Naive thymus-derived CD4-positive, alpha-beta T cell (primary cell): ENCODE measurements at regions of chr9 and their contacts with region 1.

Region 1: GRCh38 chr9:127586537-127586936 is 25.5 kb upstream of the STXBP1 start:
- DNase-seq: peak; percentile 24 to 60 (median 53)
- ATAC-seq: peak; percentile 79
- H3K4me3 ChIP-seq: no peak overlapping the region
- H3K4me3 Mint-ChIP-seq: no peak overlapping the region
- H3K27ac ChIP-seq: no peak overlapping the region
- H3K27ac Mint-ChIP-seq: peak overlapping the region in 1 of 9 donors; percentile 56
- H3K4me1 ChIP-seq: no peaks in the 10 kb centered on the region
- H3K4me1 Mint-ChIP-seq: peaks cover 0 to 16% (median 0%) of the 10 kb centered on the region in 7 donors
- H3K27me3 ChIP-seq: no peaks in the 10 kb centered on the region
- H3K27me3 Mint-ChIP-seq: peaks cover 0 to 22% (median 5%) of the 10 kb centered on the region in 5 donors

Region 2: DNA sequence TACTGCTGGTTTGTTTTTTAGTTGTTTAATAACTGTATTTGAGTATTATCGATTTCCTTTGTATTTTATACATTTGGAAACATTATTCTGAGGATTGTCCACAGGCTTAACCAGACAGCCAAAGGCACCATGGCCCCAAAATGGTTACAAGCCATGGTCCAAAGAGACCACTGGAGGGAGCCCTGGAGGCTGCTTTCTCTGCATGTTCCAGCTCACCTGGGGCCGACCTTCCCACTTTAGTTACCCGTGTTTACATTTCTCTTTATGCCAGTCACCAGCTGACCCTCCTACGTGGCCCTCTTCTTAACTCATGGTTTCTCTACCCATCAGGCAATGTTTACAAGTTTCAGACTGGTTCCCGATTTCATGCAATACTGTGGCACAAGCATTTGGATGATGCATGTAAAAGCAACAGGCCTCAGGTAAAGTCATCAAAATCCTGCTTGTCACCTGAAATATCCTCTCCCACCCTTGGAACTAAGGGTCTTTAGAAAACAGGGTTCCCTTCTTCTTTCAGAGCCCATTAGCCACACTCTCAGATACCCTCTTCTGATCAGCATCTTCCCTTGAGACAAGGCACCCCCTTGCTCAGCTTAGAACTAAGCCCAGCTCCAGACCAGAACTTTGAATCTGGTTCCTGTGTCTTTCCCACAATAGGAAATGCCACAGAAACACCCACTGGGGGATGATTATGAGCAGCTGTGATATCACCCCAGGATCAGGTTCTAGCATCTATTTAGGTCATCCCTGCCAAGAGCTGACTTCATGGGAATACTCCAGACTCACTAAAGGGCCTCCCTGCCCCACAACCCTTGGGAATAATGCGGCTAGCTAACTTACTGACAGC is 371.9 kb before region 1 on chr9:
- CTCF ChIA-PET with region 1: interaction called, 6 read pairs
- POLR2A ChIA-PET with region 1: no interaction called
- intact Hi-C with region 1: loop called in 1 of 2 experiments (anchors 1 kb)
- DNase-seq: peak in 8 of 9 donors; percentile 37 to 62 (median 48)
- ATAC-seq: peak; percentile 84
- H3K4me3 ChIP-seq: no peak overlapping the region
- H3K4me3 Mint-ChIP-seq: no peak overlapping the region
- H3K27ac ChIP-seq: no peak overlapping the region
- H3K27ac Mint-ChIP-seq: no peak overlapping the region
- H3K4me1 ChIP-seq: no peaks in the 10 kb centered on the region
- H3K4me1 Mint-ChIP-seq: peaks cover 0 to 5% (median 0%) of the 10 kb centered on the region in 7 donors
- H3K27me3 ChIP-seq: no peaks in the 10 kb centered on the region
- H3K27me3 Mint-ChIP-seq: peaks cover 0 to 16% (median 4%) of the 10 kb centered on the region in 5 donors

Region 3: DNA sequence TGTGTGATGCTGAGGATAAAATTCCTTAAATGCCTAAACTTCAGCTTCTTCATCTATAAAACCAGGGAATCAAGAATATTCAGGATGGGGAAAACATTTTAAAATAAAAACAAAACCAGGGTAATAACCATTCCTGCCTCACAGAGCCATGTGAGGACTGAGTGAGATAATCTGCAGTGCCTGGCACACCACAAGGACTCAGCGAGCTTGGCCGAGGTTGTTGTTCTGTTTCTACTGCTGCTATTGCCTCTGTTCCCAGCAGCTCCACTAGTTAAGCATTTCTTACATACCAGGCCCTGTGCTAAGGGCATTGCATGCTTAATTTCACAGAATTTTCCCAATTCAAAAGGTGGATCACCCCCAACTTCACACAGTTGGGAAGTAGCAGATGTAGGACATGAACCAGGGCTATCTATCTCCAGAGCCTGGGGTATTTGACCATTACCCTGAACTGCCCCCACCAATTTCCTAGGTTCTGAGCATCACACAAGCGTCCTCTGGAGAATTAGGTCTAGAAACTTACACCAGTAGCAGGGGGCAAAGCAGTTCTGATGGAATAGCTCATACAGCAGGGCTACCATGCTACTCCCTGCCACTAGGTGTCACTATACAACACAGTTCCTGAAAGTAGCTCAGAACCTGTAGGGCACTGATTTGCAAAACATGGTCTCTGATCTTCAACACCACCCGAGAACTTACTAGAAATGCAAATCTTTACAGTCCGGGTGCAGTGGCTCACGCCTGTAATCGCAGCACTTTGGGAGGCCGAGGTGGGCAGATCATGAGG is 60.9 kb before region 1 on chr9:
- CTCF ChIA-PET with region 1: interaction called, 20 read pairs
- POLR2A ChIA-PET with region 1: no interaction called
- intact Hi-C with region 1: no loop called
- DNase-seq: peak in 4 of 9 donors; percentile 20 to 31 (median 26)
- ATAC-seq: peak; percentile 66
- H3K4me3 ChIP-seq: no peak overlapping the region
- H3K4me3 Mint-ChIP-seq: peak overlapping the region in 1 of 10 donors; percentile 32
- H3K27ac ChIP-seq: no peak overlapping the region
- H3K27ac Mint-ChIP-seq: no peak overlapping the region
- H3K4me1 ChIP-seq: no peaks in the 10 kb centered on the region
- H3K4me1 Mint-ChIP-seq: peaks cover 0 to 3% (median 0%) of the 10 kb centered on the region in 7 donors
- H3K27me3 ChIP-seq: no peaks in the 10 kb centered on the region
- H3K27me3 Mint-ChIP-seq: no peaks in the 10 kb centered on the region

Region 4: GRCh38 chr9:127568971-127569885 is 17.3 kb before region 1 on chr9:
- CTCF ChIA-PET with region 1: no interaction called
- POLR2A ChIA-PET with region 1: no interaction called
- intact Hi-C with region 1: no loop called
- DNase-seq: peak; percentile 20 to 82 (median 60)
- ATAC-seq: peak; percentile 91
- H3K4me3 ChIP-seq: peak overlapping the region; percentile 52
- H3K4me3 Mint-ChIP-seq: peak overlapping the region; percentile 81 to 90 (median 86)
- H3K27ac ChIP-seq: peak overlapping the region; percentile 62
- H3K27ac Mint-ChIP-seq: peak overlapping the region in 8 of 9 donors; percentile 65 to 96 (median 84)
- H3K4me1 ChIP-seq: peaks cover 12 to 18% of the 10 kb centered on the region in 2 donors
- H3K4me1 Mint-ChIP-seq: peaks cover 19 to 56% (median 21%) of the 10 kb centered on the region in 7 donors
- H3K27me3 ChIP-seq: no peaks in the 10 kb centered on the region
- H3K27me3 Mint-ChIP-seq: no peaks in the 10 kb centered on the region

Region 5: GRCh38 chr9:127715394-127716337 is 129.1 kb after region 1 on chr9 and contains the starts of genes PTRH1 and TTC16:
- CTCF ChIA-PET with region 1: no interaction called
- POLR2A ChIA-PET with region 1: no interaction called
- intact Hi-C with region 1: loop called in 1 of 2 experiments (anchors 5 kb)
- DNase-seq: peak; percentile 91 to 98 (median 96)
- ATAC-seq: peak; percentile 96
- H3K4me3 ChIP-seq: peak within 1 kb of the TSS; percentile 85
- H3K4me3 Mint-ChIP-seq: peak within 1 kb of the TSS; percentile 93 to 100 (median 98)
- H3K27ac ChIP-seq: peak within 1 kb of the TSS; percentile 89
- H3K27ac Mint-ChIP-seq: peak within 1 kb of the TSS; percentile 86 to 99 (median 97)
- H3K4me1 ChIP-seq: peaks cover 31 to 32% of the 10 kb centered on the region in 2 donors
- H3K4me1 Mint-ChIP-seq: peaks cover 28 to 47% (median 30%) of the 10 kb centered on the region in 7 donors
- H3K27me3 ChIP-seq: no peaks in the 10 kb centered on the region
- H3K27me3 Mint-ChIP-seq: no peaks in the 10 kb centered on the region
- total RNA-seq, gene PTRH1: 7.8 to 9.5 (median 8.6) TPM
- total RNA-seq, gene TTC16: 0.29 to 9.9 (median 4.6) TPM

Region 6: GRCh38 chr9:127869310-127870152 is 283.0 kb after region 1 on chr9:
- CTCF ChIA-PET with region 1: interaction called, 22 read pairs
- POLR2A ChIA-PET with region 1: no interaction called
- intact Hi-C with region 1: loop called (anchors 1 to 2 kb)
- DNase-seq: peak; percentile 44 to 91 (median 62)
- ATAC-seq: peak; percentile 85
- H3K4me3 ChIP-seq: no peak overlapping the region
- H3K4me3 Mint-ChIP-seq: no peak overlapping the region
- H3K27ac ChIP-seq: no peak overlapping the region
- H3K27ac Mint-ChIP-seq: peak overlapping the region in 1 of 9 donors; percentile 32
- H3K4me1 ChIP-seq: peaks cover 12 to 13% of the 10 kb centered on the region in 2 donors
- H3K4me1 Mint-ChIP-seq: peaks cover 12 to 19% (median 16%) of the 10 kb centered on the region in 7 donors
- H3K27me3 ChIP-seq: no peaks in the 10 kb centered on the region
- H3K27me3 Mint-ChIP-seq: no peaks in the 10 kb centered on the region